Caco-2 (cell line): ENCODE measurements at regions of chr10 and their contacts with region 1.

Region 1: DNA sequence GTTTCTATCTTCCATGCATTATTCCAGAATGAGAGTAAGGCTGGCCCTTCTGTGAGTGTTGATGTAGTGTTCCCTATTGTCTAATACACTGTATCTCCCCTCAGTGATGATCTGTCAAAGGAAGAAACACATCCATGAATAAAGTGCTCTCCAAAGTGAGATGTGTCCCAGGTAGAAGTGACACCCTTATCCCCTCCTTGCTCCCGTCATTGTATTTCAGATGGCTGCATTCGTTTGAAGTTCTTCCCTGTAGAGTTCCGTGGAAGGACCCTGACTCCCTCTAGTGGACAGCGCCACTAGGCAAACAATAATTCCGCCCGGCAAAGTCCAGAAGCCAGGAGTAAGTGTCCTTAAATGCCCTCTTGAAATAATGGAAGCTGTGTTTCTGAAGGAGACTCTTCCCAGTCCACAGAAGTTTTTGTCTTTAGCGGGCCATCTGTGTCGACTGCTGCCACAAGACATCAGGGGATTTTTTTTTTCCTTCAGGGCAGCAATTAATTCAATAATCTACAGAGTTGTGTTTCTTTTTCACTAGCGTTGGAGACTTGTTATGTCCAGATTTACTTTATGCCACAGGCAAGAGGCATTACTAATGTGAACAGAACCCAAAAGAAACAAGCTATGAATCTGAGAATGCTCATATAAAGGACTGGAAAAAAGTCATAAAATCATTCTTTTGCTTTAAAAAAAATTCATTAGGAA is 64.6 kb downstream of the THNSL1 start:
- DNase-seq: peak; percentile 92 to 94
- H3K4me3 ChIP-seq: no peak overlapping the region
- H3K4me3 Mint-ChIP-seq: peak overlapping the region; percentile 26
- H3K27ac Mint-ChIP-seq: peak overlapping the region; percentile 42
- H3K4me1 ChIP-seq: peaks cover 64% of the 10 kb centered on the region
- H3K4me1 Mint-ChIP-seq: peaks cover 51% of the 10 kb centered on the region
- H3K27me3 ChIP-seq: no peaks in the 10 kb centered on the region
- H3K27me3 Mint-ChIP-seq: no peaks in the 10 kb centered on the region
- CTCF ChIP-seq: peak; percentile 98 to 99

Region 2: DNA sequence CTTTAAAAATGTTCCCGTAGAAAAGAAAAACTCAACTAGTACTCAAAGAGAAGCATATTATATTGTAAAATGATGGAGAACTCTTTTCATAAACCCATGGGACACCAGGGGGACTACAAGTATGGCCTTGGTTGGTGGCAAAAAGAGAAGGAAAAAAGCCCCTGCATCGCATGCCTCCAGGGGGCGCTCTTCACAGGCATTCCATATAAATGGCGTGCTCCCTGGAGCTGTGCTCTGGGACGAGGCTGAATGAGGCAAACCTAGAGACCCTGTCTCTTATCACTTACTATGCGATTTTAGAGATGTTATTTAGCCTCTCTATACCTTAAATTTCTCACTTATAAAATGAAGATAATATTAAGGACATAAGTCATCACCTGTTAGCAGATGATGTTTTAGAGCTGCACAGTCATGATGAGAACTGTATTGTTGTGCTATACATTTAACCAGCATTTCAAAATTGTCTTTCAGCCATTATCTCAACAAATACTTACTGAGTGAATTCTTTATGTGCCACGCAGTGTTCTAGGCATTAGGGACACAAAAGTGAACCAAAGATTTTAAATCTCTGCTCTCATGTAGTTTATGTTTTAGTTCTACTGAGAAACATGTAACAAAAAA is 463.1 kb before region 1 on chr10:
- CTCF ChIA-PET with region 1: interaction called, 11 read pairs
- POLR2A ChIA-PET with region 1: no interaction called
- intact Hi-C with region 1: loop called (anchors 1 kb)
- DNase-seq: peak; percentile 79 to 87
- H3K4me3 ChIP-seq: no peak overlapping the region
- H3K4me3 Mint-ChIP-seq: peak overlapping the region; percentile 67
- H3K27ac Mint-ChIP-seq: peak overlapping the region; percentile 69
- H3K4me1 ChIP-seq: peaks cover 21% of the 10 kb centered on the region
- H3K4me1 Mint-ChIP-seq: peaks cover 13% of the 10 kb centered on the region
- H3K27me3 ChIP-seq: no peaks in the 10 kb centered on the region
- H3K27me3 Mint-ChIP-seq: no peaks in the 10 kb centered on the region
- CTCF ChIP-seq: peak; percentile 94 to 99

Region 3: DNA sequence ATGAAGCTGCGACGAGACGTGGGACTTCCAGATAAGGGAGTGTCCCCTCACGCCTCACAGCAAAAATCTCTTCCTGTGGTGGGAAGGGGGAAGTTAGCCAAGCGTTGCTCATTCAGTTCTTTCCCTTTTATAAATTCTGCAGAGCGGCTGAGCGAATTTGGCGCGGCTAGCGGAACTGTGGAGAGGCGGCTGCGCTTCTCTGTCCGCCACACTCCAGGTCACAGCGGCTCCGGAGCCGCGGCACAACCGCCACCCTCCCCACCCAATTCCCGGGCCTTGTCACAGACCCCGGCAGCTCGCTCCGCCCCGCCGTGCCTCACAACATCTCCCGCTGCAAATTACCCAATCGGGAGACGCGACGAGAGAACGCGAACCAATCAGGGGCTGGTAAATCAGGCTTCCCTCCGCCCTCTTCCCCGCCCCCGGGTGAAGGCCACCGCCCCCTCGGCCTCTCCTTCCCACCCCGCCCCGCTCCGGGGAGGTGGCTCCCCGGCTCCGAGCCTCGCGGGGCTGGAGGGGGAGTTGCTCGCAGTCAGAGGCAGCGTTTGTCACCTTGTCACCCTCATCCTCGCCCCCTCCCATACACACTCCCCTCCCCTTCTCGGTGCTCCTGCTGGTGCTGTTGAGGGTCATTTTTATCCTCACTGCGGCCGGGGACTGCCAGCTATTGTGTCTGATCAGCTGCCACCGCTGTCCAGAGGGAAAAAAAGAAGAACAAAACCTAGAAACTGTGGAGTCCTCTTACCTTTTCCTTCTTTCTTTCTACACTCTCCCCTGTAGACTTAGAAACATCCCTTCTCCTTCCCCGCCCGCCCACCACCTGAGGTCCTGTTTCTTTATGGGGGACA is 356.4 kb before region 1 on chr10:
- CTCF ChIA-PET with region 1: interaction called, 4 read pairs
- POLR2A ChIA-PET with region 1: no interaction called
- intact Hi-C with region 1: loop called (anchors 2 kb)
- DNase-seq: peak; percentile 99 to 100
- H3K4me3 ChIP-seq: peak overlapping the region; percentile 85
- H3K4me3 Mint-ChIP-seq: no peak overlapping the region
- H3K27ac Mint-ChIP-seq: peak overlapping the region; percentile 86
- H3K4me1 ChIP-seq: peaks cover 8% of the 10 kb centered on the region
- H3K4me1 Mint-ChIP-seq: peaks cover 21% of the 10 kb centered on the region
- H3K27me3 ChIP-seq: no peaks in the 10 kb centered on the region
- H3K27me3 Mint-ChIP-seq: no peaks in the 10 kb centered on the region
- CTCF ChIP-seq: no peak

Region 4: GRCh38 chr10:24806262-24806661 is 274.8 kb before region 1 on chr10:
- CTCF ChIA-PET with region 1: no interaction called
- POLR2A ChIA-PET with region 1: no interaction called
- intact Hi-C with region 1: no loop called
- DNase-seq: no peak
- H3K4me3 ChIP-seq: no peak overlapping the region
- H3K4me3 Mint-ChIP-seq: no peak overlapping the region
- H3K27ac Mint-ChIP-seq: no peak overlapping the region
- H3K4me1 ChIP-seq: no peaks in the 10 kb centered on the region
- H3K4me1 Mint-ChIP-seq: no peaks in the 10 kb centered on the region
- H3K27me3 ChIP-seq: no peaks in the 10 kb centered on the region
- H3K27me3 Mint-ChIP-seq: no peaks in the 10 kb centered on the region
- CTCF ChIP-seq: no peak

Region 5: GRCh38 chr10:24952707-24953645 is 128.1 kb before region 1 on chr10:
- CTCF ChIA-PET with region 1: no interaction called
- POLR2A ChIA-PET with region 1: no interaction called
- intact Hi-C with region 1: loop called (anchors 1 kb)
- DNase-seq: peak; percentile 85 to 91
- H3K4me3 ChIP-seq: peak overlapping the region; percentile 97
- H3K4me3 Mint-ChIP-seq: peak overlapping the region; percentile 84
- H3K27ac Mint-ChIP-seq: peak overlapping the region; percentile 90
- H3K4me1 ChIP-seq: peaks cover 32% of the 10 kb centered on the region
- H3K4me1 Mint-ChIP-seq: peaks cover 23% of the 10 kb centered on the region
- H3K27me3 ChIP-seq: no peaks in the 10 kb centered on the region
- H3K27me3 Mint-ChIP-seq: no peaks in the 10 kb centered on the region
- CTCF ChIP-seq: peak; percentile 47 to 72

Region 6: DNA sequence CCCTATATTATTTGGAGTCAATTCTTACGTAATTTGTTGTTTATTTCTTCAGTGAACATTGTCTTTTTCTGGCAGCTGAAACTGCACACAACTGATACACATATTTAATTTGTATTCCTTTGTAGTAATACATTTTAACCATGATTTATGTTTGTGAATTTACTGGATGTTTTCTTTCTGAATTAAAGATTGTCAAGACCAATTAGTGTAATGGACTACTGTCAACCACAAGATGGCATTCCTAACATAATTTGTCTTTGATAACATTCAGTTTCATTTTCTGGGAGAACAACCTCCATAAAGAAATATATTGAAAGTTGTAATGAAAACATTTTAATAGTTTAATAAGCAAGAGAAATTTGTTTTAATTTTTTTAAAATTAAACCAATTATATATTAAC is 54.6 kb before region 1 on chr10:
- CTCF ChIA-PET with region 1: interaction called, 7 read pairs
- POLR2A ChIA-PET with region 1: no interaction called
- intact Hi-C with region 1: loop called (anchors 1 kb)
- DNase-seq: no peak
- H3K4me3 ChIP-seq: no peak overlapping the region
- H3K4me3 Mint-ChIP-seq: no peak overlapping the region
- H3K27ac Mint-ChIP-seq: no peak overlapping the region
- H3K4me1 ChIP-seq: no peaks in the 10 kb centered on the region
- H3K4me1 Mint-ChIP-seq: no peaks in the 10 kb centered on the region
- H3K27me3 ChIP-seq: no peaks in the 10 kb centered on the region
- H3K27me3 Mint-ChIP-seq: no peaks in the 10 kb centered on the region
- CTCF ChIP-seq: peak; percentile 47 to 52

Region 7: DNA sequence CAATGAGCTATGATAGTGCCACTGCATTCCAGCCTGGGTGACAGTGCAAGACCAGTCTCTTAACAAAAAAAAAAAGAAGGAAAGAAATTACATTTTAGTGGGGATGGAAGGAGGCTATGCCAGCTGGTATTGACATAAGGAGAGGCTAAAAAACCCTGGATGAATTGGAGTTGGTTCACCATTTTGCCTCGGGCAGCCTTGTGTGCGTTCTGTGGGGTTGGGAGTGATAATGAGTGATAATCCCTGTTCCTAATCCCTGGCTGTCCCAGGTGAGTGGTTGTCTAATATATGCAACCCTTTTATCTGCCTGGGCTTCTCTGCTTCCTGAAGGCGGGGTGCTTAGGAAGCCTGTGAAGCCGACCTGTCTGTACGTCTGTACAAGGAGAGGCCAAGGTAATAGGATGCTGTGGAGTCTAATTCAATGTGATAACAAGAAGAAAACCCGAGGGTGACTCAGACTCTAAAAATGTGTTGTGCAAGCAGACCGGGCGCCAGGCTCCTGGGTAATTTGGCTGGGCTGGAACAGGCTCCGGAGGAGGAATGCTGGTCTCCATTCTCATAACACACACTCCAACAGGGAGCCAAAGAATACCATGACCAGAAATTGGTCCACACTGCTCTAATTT is 21.2 kb before region 1 on chr10:
- CTCF ChIA-PET with region 1: interaction called, 6 read pairs
- POLR2A ChIA-PET with region 1: interaction called, 4 read pairs
- intact Hi-C with region 1: loop called (anchors 1 kb)
- DNase-seq: peak; percentile 94 to 95
- H3K4me3 ChIP-seq: no peak overlapping the region
- H3K4me3 Mint-ChIP-seq: peak overlapping the region; percentile 70
- H3K27ac Mint-ChIP-seq: peak overlapping the region; percentile 94
- H3K4me1 ChIP-seq: peaks cover 35% of the 10 kb centered on the region
- H3K4me1 Mint-ChIP-seq: peaks cover 48% of the 10 kb centered on the region
- H3K27me3 ChIP-seq: no peaks in the 10 kb centered on the region
- H3K27me3 Mint-ChIP-seq: no peaks in the 10 kb centered on the region
- CTCF ChIP-seq: no peak